Activated T-helper 1 cell treated with anti-CD3 and anti-CD28 coated beads, Interleukin-12 subunit alpha, Interleukin-12 subunit beta, Interleukin-2, Interleukin-4 antibody, amounts not matched to agents 30 ng/mL and 10 ng/mL and 1 ng/mL, durations not matched to agents 14 hours and 24 hours and 36 hours (primary cell): ENCODE measurements at regions of chr22 and their contacts with region 1.

Region 1: GRCh38 chr22:30386960-30387827 is at the start of gene RNF215:
- DNase-seq: peak; percentile 79
- H3K4me3 Mint-ChIP-seq: peak within 1 kb of the TSS; percentile 84
- H3K27ac Mint-ChIP-seq: peak within 1 kb of the TSS; percentile 56
- H3K4me1 Mint-ChIP-seq: peaks cover 25% of the 10 kb centered on the region
- H3K27me3 Mint-ChIP-seq: no peaks in the 10 kb centered on the region
- total RNA-seq, gene RNF215: 10.3 and 13.2 TPM in 2 replicates

Region 2: DNA sequence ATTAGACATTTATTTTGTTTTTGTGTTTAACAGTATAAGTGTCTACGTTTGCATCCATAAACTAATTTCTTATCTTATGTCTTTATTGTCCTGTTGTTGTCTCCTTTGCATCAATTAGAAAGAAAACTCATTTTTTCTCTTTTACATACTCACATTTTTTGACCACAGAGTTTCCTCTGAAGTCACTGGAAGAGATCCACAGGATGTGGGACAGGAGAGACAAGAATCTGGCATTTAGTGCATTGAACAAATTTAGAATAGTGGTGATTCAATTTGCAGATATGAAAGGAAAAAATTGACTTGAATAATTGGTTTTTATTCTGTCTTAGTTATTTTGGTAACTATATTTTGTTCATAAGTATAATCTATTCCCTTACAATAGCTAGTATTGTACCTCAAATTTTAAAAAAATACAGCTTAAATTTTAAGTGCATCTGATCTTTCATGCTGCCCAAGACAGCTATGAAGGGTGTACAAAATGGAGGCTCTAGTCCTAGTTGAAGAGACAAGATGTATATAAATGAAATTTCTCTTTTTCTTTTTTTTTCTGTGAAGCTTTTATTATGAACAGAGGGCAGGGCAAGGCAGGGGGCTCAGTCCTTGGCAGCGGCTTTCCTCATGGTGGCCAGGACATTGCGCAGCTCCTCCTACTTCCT is 282.6 kb before region 1 on chr22:
- intact Hi-C with region 1: loop called (anchors 2 kb)
- DNase-seq: peak; percentile 23
- H3K4me3 Mint-ChIP-seq: peak overlapping the region; percentile 37
- H3K27ac Mint-ChIP-seq: peak overlapping the region; percentile 82
- H3K4me1 Mint-ChIP-seq: peaks cover 57% of the 10 kb centered on the region
- H3K27me3 Mint-ChIP-seq: no peaks in the 10 kb centered on the region

Region 3: GRCh38 chr22:30305519-30305905 is 81.7 kb before region 1 on chr22:
- intact Hi-C with region 1: loop called (anchors 5 kb)
- DNase-seq: peak; percentile 68
- H3K4me3 Mint-ChIP-seq: peak overlapping the region; percentile 77
- H3K27ac Mint-ChIP-seq: peak overlapping the region; percentile 95
- H3K4me1 Mint-ChIP-seq: peaks cover 93% of the 10 kb centered on the region
- H3K27me3 Mint-ChIP-seq: no peaks in the 10 kb centered on the region

Region 4: GRCh38 chr22:30356449-30357235 is 30.6 kb before region 1 on chr22 and contains the starts of genes CCDC157 and SF3A1:
- intact Hi-C with region 1: loop called (anchors 1 kb)
- DNase-seq: peak; percentile 88
- H3K4me3 Mint-ChIP-seq: peak within 1 kb of the TSS; percentile 94
- H3K27ac Mint-ChIP-seq: peak within 1 kb of the TSS; percentile 90
- H3K4me1 Mint-ChIP-seq: peaks cover 43% of the 10 kb centered on the region
- H3K27me3 Mint-ChIP-seq: peaks cover 8% of the 10 kb centered on the region
- total RNA-seq, gene CCDC157: 2.4 and 3.0 TPM in 2 replicates
- total RNA-seq, gene SF3A1: 308 and 310 TPM in 2 replicates

Region 5: GRCh38 chr22:30397656-30398635 is 10.8 kb after region 1 on chr22:
- intact Hi-C with region 1: no loop called
- DNase-seq: no peak
- H3K4me3 Mint-ChIP-seq: peak overlapping the region; percentile 86
- H3K27ac Mint-ChIP-seq: peak overlapping the region; percentile 58
- H3K4me1 Mint-ChIP-seq: peaks cover 46% of the 10 kb centered on the region
- H3K27me3 Mint-ChIP-seq: no peaks in the 10 kb centered on the region

Region 6: DNA sequence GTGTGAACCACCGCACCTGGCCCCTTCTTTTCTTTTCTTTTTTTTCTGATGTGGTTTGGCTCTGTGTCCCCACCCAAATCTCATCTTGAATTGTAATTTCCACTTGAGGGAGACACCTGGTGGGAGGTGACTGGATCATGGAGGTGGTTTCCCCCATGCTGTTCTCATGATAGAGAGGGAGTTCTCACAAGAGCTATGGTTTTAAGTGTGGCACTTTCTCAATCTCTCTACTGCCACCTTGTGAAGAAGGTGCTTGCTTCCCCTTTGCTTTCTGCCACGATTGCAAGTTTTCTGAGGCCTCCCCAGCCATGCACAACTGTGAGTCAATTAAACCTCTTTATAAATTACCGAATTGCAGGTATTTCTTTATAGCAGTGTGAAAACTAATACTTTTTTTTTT is 214.9 kb after region 1 on chr22:
- intact Hi-C with region 1: loop called (anchors 5 kb)
- DNase-seq: peak; percentile 5
- H3K4me3 Mint-ChIP-seq: no peak overlapping the region
- H3K27ac Mint-ChIP-seq: no peak overlapping the region
- H3K4me1 Mint-ChIP-seq: peaks cover 21% of the 10 kb centered on the region
- H3K27me3 Mint-ChIP-seq: no peaks in the 10 kb centered on the region